Mucosa of descending colon (tissue), 3 donors: ENCODE measurements at regions of chr9 and their contacts with region 1.

Region 1: DNA sequence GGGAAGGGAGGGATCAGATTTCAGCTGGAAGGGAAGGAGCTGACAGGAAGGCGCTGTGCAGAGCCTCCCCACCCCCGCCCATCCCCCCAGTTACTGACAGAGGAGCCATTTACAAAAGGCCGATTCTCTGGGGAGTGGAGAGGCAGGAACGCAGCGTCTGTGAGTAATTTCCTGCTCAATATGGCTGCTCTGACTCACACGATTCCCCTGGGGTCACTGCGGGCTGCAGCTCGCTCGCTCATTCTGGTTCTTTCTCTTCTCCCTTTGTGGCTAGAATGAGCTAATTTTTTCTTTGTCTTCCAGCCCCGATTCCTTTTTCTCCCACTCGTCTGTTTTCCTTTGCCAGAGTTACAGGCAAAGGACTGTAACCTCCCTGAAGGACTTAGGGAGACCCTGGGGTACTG is 28.8 kb downstream of the PTPA start:
- DNase-seq: peak; percentile 79 to 89 (median 89)
- ATAC-seq: peak; percentile 85
- H3K4me3 ChIP-seq: no peak overlapping the region
- H3K4me1 ChIP-seq: peaks cover 43% of the 10 kb centered on the region
- CTCF ChIP-seq: no peak

Region 2: GRCh38 chr9:129235931-129236331 is 95.9 kb after region 1 on chr9:
- intact Hi-C with region 1: no loop called
- DNase-seq: peak; percentile 42 to 75 (median 50)
- ATAC-seq: peak; percentile 78
- H3K4me3 ChIP-seq: no peak overlapping the region
- H3K4me1 ChIP-seq: no peaks in the 10 kb centered on the region
- CTCF ChIP-seq: no peak

Region 3: DNA sequence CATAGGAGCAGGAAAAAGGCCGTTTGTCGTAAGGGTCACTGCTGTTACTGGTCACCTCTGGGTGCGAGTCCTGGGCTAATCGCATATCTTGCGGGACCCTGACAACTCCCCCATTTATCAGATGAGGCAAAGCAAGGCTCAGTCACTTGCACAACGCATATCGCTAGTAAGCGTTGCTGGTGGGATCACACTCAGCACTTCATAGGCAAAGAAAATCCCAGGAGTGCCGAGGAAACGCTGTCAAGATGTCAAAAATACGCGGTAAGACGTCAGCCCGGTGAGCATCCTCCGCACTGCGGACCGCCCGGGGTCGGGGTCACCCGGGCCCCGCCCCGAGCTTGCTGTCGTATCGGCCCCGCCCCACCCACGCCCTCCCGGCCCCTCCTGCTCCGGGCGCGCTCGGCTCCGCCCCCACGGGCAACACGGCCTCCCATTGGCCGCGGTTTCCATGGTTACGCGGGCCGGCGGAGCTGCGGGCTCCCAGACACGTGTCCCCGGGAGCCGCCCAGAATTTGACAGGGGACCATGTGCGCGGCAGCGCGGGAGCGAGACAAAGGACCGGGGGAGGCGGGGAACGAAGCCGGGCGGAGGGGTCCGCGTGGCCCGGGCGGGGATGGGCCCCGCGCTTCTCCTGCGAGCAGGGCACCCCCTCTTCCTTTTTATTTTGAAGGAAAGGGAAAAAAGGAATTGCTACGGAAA is 118.3 kb after region 1 on chr9:
- intact Hi-C with region 1: loop called in 1 of 2 experiments (anchors 10 kb)
- DNase-seq: peak; percentile 76 to 91 (median 86)
- ATAC-seq: peak; percentile 93
- H3K4me3 ChIP-seq: no peak overlapping the region
- H3K4me1 ChIP-seq: peaks cover 5% of the 10 kb centered on the region
- CTCF ChIP-seq: no peak

Region 4: GRCh38 chr9:129776938-129777768 is 637.2 kb after region 1 on chr9:
- intact Hi-C with region 1: loop called in 1 of 2 experiments (anchors 10 kb)
- DNase-seq: peak; percentile 78 to 92 (median 79)
- ATAC-seq: peak; percentile 85
- H3K4me3 ChIP-seq: no peak overlapping the region
- H3K4me1 ChIP-seq: no peaks in the 10 kb centered on the region
- CTCF ChIP-seq: no peak